ENCODE measurements at regions of chr12 and their contacts with region 1.

Region 1: DNA sequence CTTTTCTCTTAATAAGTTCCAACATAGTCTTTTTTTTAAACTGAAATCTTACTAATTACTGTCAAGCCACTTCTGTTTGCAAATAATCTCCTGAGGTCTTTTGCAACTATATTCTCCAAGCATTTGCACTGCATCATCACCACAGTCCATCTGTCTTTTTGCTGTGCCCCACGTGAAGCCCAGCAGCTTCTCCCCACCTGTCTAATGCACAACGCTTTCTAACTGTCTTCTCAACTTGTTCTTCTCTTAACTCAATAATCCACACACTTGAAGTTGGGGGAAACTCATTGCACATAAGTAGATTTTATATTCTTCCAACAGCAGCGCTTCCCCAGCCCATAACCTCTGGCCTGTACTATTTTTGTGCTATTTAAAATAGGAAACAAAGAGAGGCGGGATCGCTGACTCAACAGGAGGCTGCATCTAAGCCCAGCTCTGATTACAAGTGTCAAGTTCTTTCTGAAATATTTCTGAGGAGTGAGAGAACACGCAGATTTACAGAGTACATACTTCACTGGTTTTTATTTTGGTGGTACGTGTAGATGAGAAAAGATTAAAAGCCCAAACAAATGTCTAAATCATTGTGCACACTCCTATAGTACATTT is 226.7 kb downstream of the GXYLT1 start:
- DNase-seq: no peak
- H3K4me3 ChIP-seq: no peak overlapping the region
- H3K27ac ChIP-seq: peak overlapping the region in 2 of 8 donors; percentile 7 to 8
- H3K4me1 ChIP-seq: peaks cover 0 to 14% (median 4%) of the 10 kb centered on the region in 6 donors
- H3K27me3 ChIP-seq: no peaks in the 10 kb centered on the region
- CTCF ChIP-seq: no peak
- POLR2A ChIP-seq: no peak

Region 2: GRCh38 chr12:41514907-41515306 is 403.1 kb before region 1 on chr12:
- intact Hi-C with region 1: loop called (anchors 10 kb)
- DNase-seq: no peak
- H3K4me3 ChIP-seq: no peak overlapping the region
- H3K27ac ChIP-seq: no peak overlapping the region
- H3K4me1 ChIP-seq: peaks cover 0 to 3% (median 0%) of the 10 kb centered on the region in 6 donors
- H3K27me3 ChIP-seq: no peaks in the 10 kb centered on the region
- CTCF ChIP-seq: no peak
- POLR2A ChIP-seq: no peak

Measured in spleen (tissue), 13 donors.